ENCODE measurements at regions of chr9 and their contacts with region 1.

Region 1: GRCh38 chr9:68601081-68601480 is 60.4 kb upstream of the TMEM252 start:
- DNase-seq: no peak
- H3K4me3 Mint-ChIP-seq: no peak overlapping the region
- H3K27ac Mint-ChIP-seq: no peak overlapping the region
- H3K4me1 Mint-ChIP-seq: no peaks in the 10 kb centered on the region
- H3K27me3 Mint-ChIP-seq: peaks cover 2% of the 10 kb centered on the region

Region 2: GRCh38 chr9:68643901-68644809 is 43.1 kb after region 1 on chr9:
- intact Hi-C with region 1: loop called (anchors 5 kb)
- DNase-seq: no peak
- H3K4me3 Mint-ChIP-seq: no peak overlapping the region
- H3K27ac Mint-ChIP-seq: no peak overlapping the region
- H3K4me1 Mint-ChIP-seq: peaks cover 29% of the 10 kb centered on the region
- H3K27me3 Mint-ChIP-seq: no peaks in the 10 kb centered on the region

Measured in activated T-helper 1 cell treated with anti-CD3 and anti-CD28 coated beads, Interleukin-12 subunit alpha, Interleukin-12 subunit beta, Interleukin-2, Interleukin-4 antibody, amounts not matched to agents 30 ng/mL and 10 ng/mL and 1 ng/mL, durations not matched to agents 14 hours and 24 hours and 36 hours (primary cell).